Heart right ventricle (tissue), 16 donors: ENCODE measurements at regions of chr20 and their contacts with region 1.

Region 1: GRCh38 chr20:41028348-41029148 is at the start of gene TOP1:
- DNase-seq: peak; percentile 100
- ATAC-seq: peak; percentile 98 to 99 (median 99)
- H3K4me3 ChIP-seq: peak within 1 kb of the TSS; percentile 81 to 100 (median 92)
- H3K27ac ChIP-seq: peak within 1 kb of the TSS; percentile 90 to 100 (median 97)
- H3K4me1 ChIP-seq: peaks cover 6 to 51% (median 43%) of the 10 kb centered on the region in 9 donors
- H3K27me3 ChIP-seq: no peaks in the 10 kb centered on the region
- CTCF ChIP-seq: peak in 3 of 9 donors; percentile 14 to 25 (median 18)
- total RNA-seq, gene TOP1: 19.3 to 28.3 (median 23.8) TPM

Region 2: DNA sequence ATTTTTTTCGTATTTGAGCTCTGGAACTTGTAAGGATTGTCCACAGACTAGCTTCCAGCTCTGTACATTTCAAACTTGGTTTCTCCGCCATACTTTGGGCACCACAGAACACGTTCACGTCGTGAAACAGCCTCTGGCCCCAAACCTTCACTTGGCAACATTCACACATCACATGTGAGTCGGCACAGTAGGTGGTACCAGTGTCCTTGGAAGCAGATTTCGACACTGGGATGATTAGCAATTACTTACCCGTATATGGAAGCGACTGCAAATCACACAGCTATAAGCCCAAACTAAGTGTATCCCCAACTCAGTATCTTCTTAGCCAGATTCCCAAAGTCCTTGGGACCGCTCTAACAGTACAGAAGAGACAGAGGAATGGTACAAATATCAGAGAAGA is 399.7 kb before region 1 on chr20:
- intact Hi-C with region 1: no loop called
- DNase-seq: no peak
- ATAC-seq: no peak
- H3K4me3 ChIP-seq: no peak overlapping the region
- H3K27ac ChIP-seq: no peak overlapping the region
- H3K4me1 ChIP-seq: no peaks in the 10 kb centered on the region
- H3K27me3 ChIP-seq: peaks cover 0 to 6% (median 0%) of the 10 kb centered on the region in 7 donors
- CTCF ChIP-seq: no peak

Region 3: GRCh38 chr20:40970201-40970600 is 58.3 kb before region 1 on chr20:
- intact Hi-C with region 1: no loop called
- DNase-seq: no peak
- ATAC-seq: no peak
- H3K4me3 ChIP-seq: no peak overlapping the region
- H3K27ac ChIP-seq: no peak overlapping the region
- H3K4me1 ChIP-seq: peaks cover 0 to 10% (median 0%) of the 10 kb centered on the region in 9 donors
- H3K27me3 ChIP-seq: peaks cover 0 to 23% (median 0%) of the 10 kb centered on the region in 7 donors
- CTCF ChIP-seq: no peak

Region 4: GRCh38 chr20:41005361-41005729 is 23.2 kb before region 1 on chr20:
- intact Hi-C with region 1: loop called in 1 of 10 experiments (anchors 1 kb)
- DNase-seq: peak; percentile 82 to 90
- ATAC-seq: peak; percentile 50 to 85 (median 69)
- H3K4me3 ChIP-seq: no peak overlapping the region
- H3K27ac ChIP-seq: peak overlapping the region in 9 of 10 donors; percentile 30 to 86 (median 60)
- H3K4me1 ChIP-seq: peaks cover 3 to 77% (median 39%) of the 10 kb centered on the region in 9 donors
- H3K27me3 ChIP-seq: no peaks in the 10 kb centered on the region
- CTCF ChIP-seq: no peak

Region 5: GRCh38 chr20:41041693-41042092 is 13.1 kb after region 1 on chr20:
- intact Hi-C with region 1: loop called in 2 of 10 experiments (anchors 2 kb)
- DNase-seq: no peak
- ATAC-seq: no peak
- H3K4me3 ChIP-seq: no peak overlapping the region
- H3K27ac ChIP-seq: no peak overlapping the region
- H3K4me1 ChIP-seq: peaks cover 0 to 74% (median 43%) of the 10 kb centered on the region in 9 donors
- H3K27me3 ChIP-seq: no peaks in the 10 kb centered on the region
- CTCF ChIP-seq: no peak

Region 6: GRCh38 chr20:41047975-41048305 is 19.4 kb after region 1 on chr20:
- intact Hi-C with region 1: loop called in 2 of 10 experiments (anchors 2 kb)
- DNase-seq: no peak
- ATAC-seq: peak in 6 of 8 donors; percentile 42 to 74 (median 61)
- H3K4me3 ChIP-seq: peak overlapping the region in 8 of 10 donors; percentile 2 to 44 (median 30)
- H3K27ac ChIP-seq: peak overlapping the region in 8 of 10 donors; percentile 20 to 76 (median 44)
- H3K4me1 ChIP-seq: peaks cover 19 to 97% (median 86%) of the 10 kb centered on the region in 9 donors
- H3K27me3 ChIP-seq: no peaks in the 10 kb centered on the region
- CTCF ChIP-seq: no peak

Region 7: GRCh38 chr20:41072190-41072863 is 43.8 kb after region 1 on chr20:
- intact Hi-C with region 1: loop called in 5 of 10 experiments (anchors 2 to 10 kb)
- DNase-seq: peak in 1 of 2 donors; percentile 18
- ATAC-seq: peak in 7 of 8 donors; percentile 60 to 88 (median 70)
- H3K4me3 ChIP-seq: no peak overlapping the region
- H3K27ac ChIP-seq: peak overlapping the region in 6 of 10 donors; percentile 10 to 56 (median 36)
- H3K4me1 ChIP-seq: peaks cover 3 to 86% (median 57%) of the 10 kb centered on the region in 9 donors
- H3K27me3 ChIP-seq: no peaks in the 10 kb centered on the region
- CTCF ChIP-seq: no peak

Region 8: DNA sequence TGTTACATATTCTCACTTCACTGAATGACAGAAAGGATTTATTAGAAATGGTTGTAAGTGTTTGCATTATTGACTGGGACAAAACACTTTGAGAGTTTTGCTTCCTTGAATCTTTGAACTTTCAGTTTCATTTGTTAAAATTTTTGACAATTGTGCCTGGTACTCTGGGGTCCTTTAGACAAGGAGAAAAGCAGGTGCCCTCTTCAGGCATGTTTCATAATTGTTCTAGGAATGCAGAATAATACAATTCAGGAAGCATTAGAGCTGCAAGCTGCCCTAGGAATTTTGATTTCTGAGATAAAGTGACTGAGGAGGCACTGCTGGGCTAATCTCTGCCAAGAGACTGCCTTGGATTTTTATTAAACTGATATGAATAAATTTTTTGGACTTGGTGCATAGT is 49.8 kb after region 1 on chr20:
- intact Hi-C with region 1: loop called in 5 of 10 experiments (anchors 2 to 10 kb)
- DNase-seq: peak in 1 of 2 donors; percentile 32
- ATAC-seq: peak in 7 of 8 donors; percentile 73 to 89 (median 82)
- H3K4me3 ChIP-seq: peak overlapping the region in 1 of 10 donors; percentile 5
- H3K27ac ChIP-seq: peak overlapping the region in 5 of 10 donors; percentile 13 to 46 (median 28)
- H3K4me1 ChIP-seq: peaks cover 0 to 57% (median 42%) of the 10 kb centered on the region in 9 donors
- H3K27me3 ChIP-seq: no peaks in the 10 kb centered on the region
- CTCF ChIP-seq: peak; percentile 29 to 73 (median 56)

Region 9: GRCh38 chr20:41119546-41120235 is 91.1 kb after region 1 on chr20:
- intact Hi-C with region 1: no loop called
- DNase-seq: no peak
- ATAC-seq: no peak
- H3K4me3 ChIP-seq: no peak overlapping the region
- H3K27ac ChIP-seq: no peak overlapping the region
- H3K4me1 ChIP-seq: no peaks in the 10 kb centered on the region
- H3K27me3 ChIP-seq: no peaks in the 10 kb centered on the region
- CTCF ChIP-seq: no peak